ENCODE measurements at regions of chr10 and their contacts with region 1.

Region 1: DNA sequence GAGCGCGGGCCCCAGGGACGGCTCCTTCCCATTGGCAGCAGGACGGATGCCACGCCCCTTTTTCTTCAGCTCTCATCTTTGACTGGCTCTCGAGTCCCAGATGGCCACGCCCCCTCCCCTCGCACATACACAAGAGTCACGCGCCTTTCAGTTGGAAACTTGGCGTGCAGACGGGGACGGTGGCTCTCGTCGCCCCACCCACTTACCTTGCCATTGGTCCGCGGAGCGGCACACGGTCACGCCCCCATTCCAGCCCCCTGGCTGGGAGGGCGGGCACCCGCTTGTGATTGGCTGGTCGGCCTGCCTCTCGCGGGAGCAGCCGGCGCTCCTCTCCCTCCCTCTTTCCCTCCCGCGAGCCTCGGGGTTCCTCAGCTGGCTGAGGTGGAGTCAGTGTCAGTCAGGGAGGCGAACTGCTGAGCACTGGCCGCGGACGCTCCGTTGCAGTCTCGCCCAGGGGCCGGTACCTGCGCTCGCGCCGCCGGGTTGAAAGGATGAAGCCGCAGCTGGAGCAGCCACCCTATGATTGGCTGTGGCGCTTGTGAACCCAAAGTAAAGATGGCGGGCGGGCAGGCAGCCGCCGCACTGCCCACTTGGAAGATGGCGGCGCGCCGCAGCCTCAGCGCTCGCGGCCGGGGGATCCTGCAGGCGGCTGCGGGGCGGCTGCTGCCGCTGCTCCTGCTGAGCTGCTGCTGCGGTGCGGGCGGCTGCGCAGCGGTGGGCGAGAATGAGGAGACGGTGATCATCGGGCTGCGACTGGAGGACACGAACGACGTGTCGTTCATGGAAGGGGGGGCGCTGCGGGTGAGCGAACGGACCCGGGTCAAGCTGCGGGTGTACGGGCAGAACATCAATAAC is at the start of gene CNNM2:
- DNase-seq: peak; percentile 98 to 100
- H3K4me3 ChIP-seq: peak within 1 kb of the TSS; percentile 89 to 96 (median 92)
- H3K27ac ChIP-seq: peak within 1 kb of the TSS; percentile 93
- H3K4me1 ChIP-seq: peaks cover 3 to 10% (median 7%) of the 10 kb centered on the region in 4 experiments; a peak in 6 of 7 replicates
- H3K27me3 ChIP-seq: peaks cover 0 to 12% (median 11%) of the 10 kb centered on the region in 4 experiments; a peak in 5 of 7 replicates
- CTCF ChIP-seq: no peak
- EP300 ChIP-seq: no peak
- POLR2A ChIP-seq: peak in 1 of 2 experiments; percentile 59; a peak in 2 of 3 replicates
- RAD21 ChIP-seq: no peak
- total RNA-seq, gene CNNM2: 20.3 and 23.6 TPM in 2 replicates

Region 2: GRCh38 chr10:103053659-103054581 is 135.7 kb after region 1 on chr10:
- CTCF ChIA-PET with region 1: interaction called, 11 read pairs
- POLR2A ChIA-PET with region 1: interaction called, 3 read pairs
- DNase-seq: peak; percentile 29 to 60
- H3K4me3 ChIP-seq: no peak overlapping the region
- H3K27ac ChIP-seq: no peak overlapping the region
- H3K4me1 ChIP-seq: no peaks in the 10 kb centered on the region
- H3K27me3 ChIP-seq: no peaks in the 10 kb centered on the region
- CTCF ChIP-seq: peak; percentile 37 to 70 (median 56); a peak in 3 of 4 replicates
- EP300 ChIP-seq: no peak
- POLR2A ChIP-seq: no peak
- RAD21 ChIP-seq: peak; percentile 62 to 63

Region 3: DNA sequence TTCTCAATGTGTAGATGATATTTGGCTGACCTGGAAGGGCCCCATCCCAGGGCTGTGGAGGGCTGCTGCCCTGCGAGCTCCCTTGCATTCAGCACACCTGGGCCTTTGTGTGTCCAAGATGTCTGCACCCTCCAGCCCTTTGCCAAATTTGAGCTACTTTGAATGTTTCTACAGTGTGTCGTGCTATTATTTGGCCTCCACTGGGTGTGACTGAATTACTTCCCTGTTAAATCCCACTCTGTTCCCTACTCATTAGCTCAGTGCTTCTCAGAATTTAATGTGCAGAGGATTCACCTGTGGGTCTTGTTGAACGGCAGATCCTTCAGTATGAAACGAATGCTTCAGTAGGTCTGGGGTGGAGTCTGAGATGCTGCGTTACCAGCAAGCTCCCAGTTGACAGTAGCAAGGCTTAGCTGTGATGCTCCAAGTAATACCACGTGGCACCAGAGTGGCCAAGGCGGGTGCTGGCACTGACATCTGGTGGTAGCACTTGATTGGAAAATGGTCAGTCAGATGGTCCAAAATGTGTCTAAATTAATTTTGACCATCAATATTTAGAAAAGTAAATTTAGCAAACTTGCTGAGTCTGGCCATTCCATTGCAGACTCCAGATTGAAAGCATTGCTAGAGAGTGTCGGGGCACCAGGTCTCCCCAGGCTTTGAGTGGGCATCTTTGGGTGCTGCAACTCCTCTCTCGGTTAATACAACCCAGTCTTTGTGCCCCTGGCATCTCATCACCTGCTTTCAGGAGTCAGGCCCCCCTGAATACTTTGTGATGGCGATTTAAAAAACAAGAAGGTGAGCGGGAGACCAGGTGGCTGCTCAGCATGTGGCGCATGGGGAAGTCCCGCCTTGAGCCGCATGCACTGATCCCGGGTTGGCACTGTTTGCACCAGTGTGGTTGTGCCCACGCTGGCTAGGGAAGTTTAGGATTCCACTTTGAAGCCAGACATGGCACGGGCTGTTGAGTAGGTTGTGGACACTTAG is 144.7 kb after region 1 on chr10:
- CTCF ChIA-PET with region 1: interaction called, 137 read pairs
- POLR2A ChIA-PET with region 1: interaction called, 22 read pairs
- DNase-seq: peak in 1 of 2 experiments; percentile 58
- H3K4me3 ChIP-seq: no peak overlapping the region
- H3K27ac ChIP-seq: no peak overlapping the region
- H3K4me1 ChIP-seq: peaks cover 0 to 10% (median 4%) of the 10 kb centered on the region in 4 experiments; a peak in 3 of 7 replicates
- H3K27me3 ChIP-seq: no peaks in the 10 kb centered on the region
- CTCF ChIP-seq: peak in 1 of 3 experiments; percentile 9; a peak in 1 of 4 replicates
- EP300 ChIP-seq: no peak
- POLR2A ChIP-seq: no peak
- RAD21 ChIP-seq: peak; percentile 39 to 51

Region 4: DNA sequence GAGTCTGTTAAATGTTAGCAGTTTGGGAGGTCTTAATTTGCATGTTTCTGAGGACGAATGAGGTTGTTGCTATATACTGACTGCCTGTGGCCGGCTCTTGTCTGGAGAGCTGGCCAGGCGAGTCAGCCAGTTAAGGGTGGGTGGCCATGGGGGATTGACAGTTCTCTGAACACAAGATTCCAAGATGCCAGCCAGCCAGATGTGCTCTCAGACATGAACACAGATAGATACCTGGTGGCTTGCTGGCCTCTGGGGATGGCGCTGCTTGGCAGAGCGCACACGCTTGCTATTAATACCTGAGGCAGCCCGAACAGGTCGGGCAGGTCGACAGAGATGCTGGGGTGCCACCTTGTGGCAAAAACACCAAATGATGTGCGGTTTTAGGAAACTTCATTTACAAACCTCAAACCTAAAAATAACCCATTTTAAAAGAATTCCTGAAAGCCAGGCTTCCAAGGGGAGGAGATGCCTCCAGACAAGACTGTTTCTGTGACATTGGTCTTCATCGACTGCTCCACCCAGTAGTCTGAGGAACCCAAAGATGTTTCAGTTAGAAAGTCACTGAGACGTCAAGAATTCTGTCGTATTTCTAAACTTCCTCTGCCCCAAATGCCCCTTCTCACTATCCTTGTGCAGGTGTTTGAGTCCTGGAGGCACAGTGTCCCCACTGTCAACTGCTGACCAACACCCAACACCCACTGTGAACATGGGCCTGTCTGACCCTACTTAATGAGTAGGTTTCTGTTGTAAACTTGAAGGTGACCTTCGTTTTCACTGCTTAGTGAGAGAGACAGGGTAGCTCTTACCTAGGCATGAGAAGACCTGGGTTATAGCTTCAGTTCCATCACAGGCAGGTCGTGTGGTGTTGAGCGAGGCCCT is 151.5 kb after region 1 on chr10:
- CTCF ChIA-PET with region 1: interaction called, 137 read pairs
- POLR2A ChIA-PET with region 1: interaction called, 22 read pairs
- DNase-seq: peak; percentile 33 to 83
- H3K4me3 ChIP-seq: no peak overlapping the region
- H3K27ac ChIP-seq: no peak overlapping the region
- H3K4me1 ChIP-seq: no peaks in the 10 kb centered on the region
- H3K27me3 ChIP-seq: no peaks in the 10 kb centered on the region
- CTCF ChIP-seq: peak; percentile 69 to 85 (median 73)
- EP300 ChIP-seq: no peak
- POLR2A ChIP-seq: no peak
- RAD21 ChIP-seq: peak; percentile 95 to 96

Region 5: GRCh38 chr10:103353281-103353680 is 435.1 kb after region 1 on chr10:
- CTCF ChIA-PET with region 1: no interaction called
- POLR2A ChIA-PET with region 1: no interaction called
- DNase-seq: no peak
- H3K4me3 ChIP-seq: no peak overlapping the region
- H3K27ac ChIP-seq: no peak overlapping the region
- H3K4me1 ChIP-seq: peaks cover 0 to 3% (median 1%) of the 10 kb centered on the region in 4 experiments; a peak in 4 of 7 replicates
- H3K27me3 ChIP-seq: no peaks in the 10 kb centered on the region
- CTCF ChIP-seq: peak in 1 of 3 experiments; percentile 16; a peak in 1 of 4 replicates
- EP300 ChIP-seq: no peak
- POLR2A ChIP-seq: no peak
- RAD21 ChIP-seq: no peak